ENCODE measurements at regions of chr7 and their contacts with region 1.

Region 1: GRCh38 chr7:158910254-158911053 is 54.1 kb downstream of the DYNC2I1 start:
- DNase-seq: no peak
- ATAC-seq: peak in 3 of 4 donors; percentile 34 to 65 (median 35)
- H3K4me3 ChIP-seq: no peak overlapping the region
- H3K27ac ChIP-seq: peak overlapping the region in 9 of 12 donors; percentile 22 to 75 (median 38)
- H3K4me1 ChIP-seq: peaks cover 0 to 14% (median 0%) of the 10 kb centered on the region in 12 donors
- H3K27me3 ChIP-seq: no peaks in the 10 kb centered on the region
- CTCF ChIP-seq: no peak
- POLR2A ChIP-seq: no peak

Region 2: DNA sequence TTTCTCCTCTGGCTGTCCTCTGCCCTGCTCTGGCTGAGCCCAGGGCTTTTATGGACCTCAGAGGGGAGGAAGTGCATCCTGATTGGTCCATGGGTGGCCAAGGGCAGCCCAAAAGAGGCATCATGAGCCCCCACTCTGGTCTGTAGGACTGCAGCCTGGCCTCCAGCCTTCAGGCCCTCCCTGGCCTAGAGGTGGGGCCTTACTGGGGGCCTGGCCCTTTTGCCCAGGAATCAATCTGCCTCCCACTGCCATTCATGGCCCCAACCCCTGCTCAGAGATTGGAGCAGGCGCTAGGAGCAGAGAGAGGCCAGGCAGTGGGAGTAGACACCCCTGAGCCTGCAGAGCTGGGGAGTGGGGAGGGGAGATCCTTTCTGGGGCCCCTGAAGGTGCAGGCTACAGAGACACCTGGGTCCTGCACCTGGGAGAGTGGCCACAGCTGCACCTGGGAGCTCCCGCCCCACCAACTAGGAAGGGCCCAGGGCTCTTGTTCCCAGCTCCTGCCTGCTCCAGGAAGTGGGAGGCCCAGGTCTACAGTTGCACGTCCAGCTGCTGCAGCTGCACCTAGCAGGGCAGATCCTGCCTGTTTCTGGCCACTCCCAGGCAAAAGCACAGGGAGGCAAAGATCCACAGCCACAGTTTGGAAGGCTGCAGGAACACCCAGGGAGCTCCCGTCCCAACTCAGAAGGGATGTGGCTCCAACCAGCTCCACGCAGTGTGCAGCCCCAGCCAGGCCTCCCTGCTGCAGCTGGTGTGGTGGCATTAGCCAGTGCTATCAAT is 60.5 kb before region 1 on chr7:
- intact Hi-C with region 1: loop called in 1 of 10 experiments (anchors 5 kb)
- DNase-seq: no peak
- ATAC-seq: peak in 2 of 4 donors; percentile 14 to 42
- H3K4me3 ChIP-seq: no peak overlapping the region
- H3K27ac ChIP-seq: peak overlapping the region in 3 of 12 donors; percentile 18 to 49 (median 24)
- H3K4me1 ChIP-seq: peaks cover 0 to 31% (median 8%) of the 10 kb centered on the region in 12 donors
- H3K27me3 ChIP-seq: no peaks in the 10 kb centered on the region
- CTCF ChIP-seq: no peak
- POLR2A ChIP-seq: no peak